ENCODE measurements at regions of chr6 and their contacts with region 1.

Region 1: DNA sequence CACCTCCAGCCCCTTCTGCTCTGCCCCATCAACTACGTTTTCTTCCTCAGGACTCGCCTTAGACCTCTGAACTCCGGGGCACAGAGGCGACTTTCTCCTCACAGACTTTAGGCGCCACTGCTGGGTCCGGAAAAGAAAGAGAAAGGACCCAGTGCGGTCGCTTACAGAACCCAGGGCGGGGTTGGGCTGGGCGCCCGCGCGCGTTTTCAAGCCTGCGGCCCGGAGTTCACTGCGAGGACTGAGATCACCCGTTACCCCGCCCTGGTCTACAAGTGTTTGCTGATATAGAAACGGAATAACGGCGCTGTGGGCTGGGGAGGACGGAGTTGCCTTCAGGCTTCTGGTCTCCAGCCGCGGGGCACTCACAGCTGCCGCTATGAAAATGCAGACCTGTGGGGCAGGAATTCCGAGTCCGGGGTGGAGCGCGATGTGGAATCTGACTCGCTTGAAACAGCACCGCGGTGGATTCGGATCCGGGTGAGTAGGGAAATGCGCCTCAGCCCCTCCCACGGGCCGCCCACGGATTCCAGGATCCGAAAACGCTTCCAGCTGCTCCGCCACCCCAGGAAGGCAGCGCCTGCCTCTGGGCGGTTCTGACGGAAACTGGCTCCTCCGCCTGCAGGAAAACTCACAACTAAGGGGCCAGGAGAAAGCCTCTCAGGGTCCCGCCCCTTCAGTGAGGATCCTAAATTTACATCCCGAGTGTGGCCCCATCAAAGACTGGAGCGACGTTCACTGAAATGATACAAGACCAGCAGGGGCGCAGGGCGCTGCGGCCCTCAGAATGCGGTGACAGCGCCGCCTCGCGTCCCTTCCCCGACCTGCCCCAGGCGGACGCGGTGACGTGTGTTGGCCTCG is 29.4 kb downstream of the HLA-F start:
- DNase-seq: peak; percentile 85 to 94
- ATAC-seq: peak; percentile 69 to 87 (median 75)
- H3K4me3 ChIP-seq: peak overlapping the region; percentile 89
- H3K4me3 Mint-ChIP-seq: peak overlapping the region; percentile 97
- H3K27ac ChIP-seq: peak overlapping the region; percentile 92
- H3K27ac Mint-ChIP-seq: peak overlapping the region; percentile 76 to 96
- H3K4me1 ChIP-seq: peaks cover 28% of the 10 kb centered on the region
- H3K4me1 Mint-ChIP-seq: peaks cover 43 to 65% of the 10 kb centered on the region in 2 donors
- H3K27me3 ChIP-seq: no peaks in the 10 kb centered on the region
- H3K27me3 Mint-ChIP-seq: no peaks in the 10 kb centered on the region
- CTCF ChIP-seq: peak; percentile 98

Region 2: DNA sequence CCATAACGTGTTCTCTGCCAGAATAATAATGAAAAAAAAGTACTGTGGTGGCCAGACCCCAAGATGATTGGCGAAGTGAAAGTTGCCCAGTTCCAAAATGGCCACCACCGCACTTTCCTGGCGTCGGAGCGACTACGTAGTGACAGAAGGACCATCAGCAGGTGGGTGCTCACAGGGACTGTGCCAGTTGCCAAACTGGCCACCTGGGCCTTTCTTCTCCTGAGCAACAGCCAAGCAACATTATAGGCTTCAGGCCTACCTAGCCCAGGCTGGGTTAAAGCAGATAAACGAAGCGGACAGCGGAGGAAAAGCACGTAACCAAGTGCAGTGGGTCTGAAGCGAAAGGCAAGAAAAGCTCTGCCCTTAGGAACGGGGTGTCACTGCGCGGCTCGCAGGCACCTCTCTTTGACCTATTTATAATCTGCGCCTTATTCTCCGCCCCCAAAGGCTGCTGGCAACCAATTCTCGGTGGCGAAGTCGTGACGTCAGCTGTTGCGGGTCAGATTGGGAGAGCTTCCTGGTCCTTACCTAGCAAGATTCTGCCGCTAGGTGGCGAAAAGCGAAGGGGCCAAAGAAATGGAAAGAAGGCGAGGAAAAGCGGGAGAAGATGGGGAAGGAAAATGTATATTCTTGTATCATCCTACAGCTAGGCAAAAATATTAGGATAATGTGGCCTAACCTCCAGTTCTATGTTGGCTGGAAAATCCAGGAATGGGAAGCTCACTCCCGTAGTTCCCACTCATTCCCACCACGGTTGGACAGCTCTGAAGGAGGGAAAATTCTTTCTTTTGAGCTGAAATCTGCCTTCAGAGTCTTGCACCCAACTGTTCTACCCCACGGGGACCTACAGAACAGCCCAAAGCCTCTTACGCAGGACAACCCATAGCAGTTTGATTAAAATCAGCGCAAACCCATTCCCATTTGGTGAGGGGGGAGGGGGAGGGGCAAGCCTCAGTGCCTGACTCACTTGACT is 102.7 kb before region 1 on chr6:
- intact Hi-C with region 1: loop called (anchors 2 kb)
- DNase-seq: peak; percentile 96 to 100
- ATAC-seq: peak; percentile 93 to 98 (median 94)
- H3K4me3 ChIP-seq: peak overlapping the region; percentile 76
- H3K4me3 Mint-ChIP-seq: peak overlapping the region; percentile 96
- H3K27ac ChIP-seq: peak overlapping the region; percentile 99
- H3K27ac Mint-ChIP-seq: peak overlapping the region; percentile 99
- H3K4me1 ChIP-seq: peaks cover 14% of the 10 kb centered on the region
- H3K4me1 Mint-ChIP-seq: peaks cover 14% of the 10 kb centered on the region in 2 donors
- H3K27me3 ChIP-seq: no peaks in the 10 kb centered on the region
- H3K27me3 Mint-ChIP-seq: peaks cover 0 to 6% of the 10 kb centered on the region in 2 donors
- CTCF ChIP-seq: peak; percentile 95

Region 3: DNA sequence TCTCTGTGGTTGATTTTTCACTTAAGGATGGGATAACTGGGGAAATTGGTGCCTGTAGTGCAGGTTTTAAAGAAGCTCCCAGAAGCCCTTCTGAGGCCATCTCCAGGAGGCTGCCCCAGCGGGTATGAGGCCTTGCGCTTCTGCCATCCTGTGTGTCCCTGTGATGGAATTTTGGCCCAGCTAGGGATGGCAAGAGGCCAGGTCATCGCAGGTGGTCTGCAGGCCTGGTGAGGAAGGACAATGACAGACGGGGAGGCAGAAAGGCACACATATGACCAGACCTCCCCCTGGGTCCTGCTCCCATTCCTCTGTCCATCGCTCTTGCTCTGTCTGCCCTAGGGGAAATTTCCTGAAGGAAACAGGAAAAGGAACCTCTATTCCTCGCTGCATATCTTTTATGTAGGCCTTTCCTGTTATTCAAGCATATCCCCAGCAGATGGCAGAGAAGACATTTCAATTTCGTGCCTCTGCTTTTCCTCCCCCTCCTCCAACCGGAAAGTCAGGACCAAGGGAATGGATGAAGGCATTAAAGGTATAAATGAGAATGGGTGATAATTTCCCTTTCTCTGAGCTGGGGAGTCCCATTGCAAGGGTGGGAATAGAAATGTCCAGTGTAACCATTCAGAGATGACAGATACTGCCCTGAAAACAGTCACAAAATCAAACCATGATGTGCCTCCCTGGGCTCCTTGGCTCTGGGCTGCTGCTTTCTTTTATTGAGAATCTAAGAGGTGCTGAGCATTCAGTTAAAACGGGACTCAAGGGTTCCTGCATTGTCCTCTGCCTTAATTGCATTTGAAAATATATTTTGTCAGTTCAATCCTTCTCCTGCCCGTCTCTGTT is 47.1 kb before region 1 on chr6:
- intact Hi-C with region 1: loop called (anchors 1 kb)
- DNase-seq: peak in 1 of 2 donors; percentile 73
- ATAC-seq: no peak
- H3K4me3 ChIP-seq: no peak overlapping the region
- H3K4me3 Mint-ChIP-seq: peak overlapping the region; percentile 55
- H3K27ac ChIP-seq: no peak overlapping the region
- H3K27ac Mint-ChIP-seq: peak overlapping the region; percentile 65 to 87
- H3K4me1 ChIP-seq: peaks cover 52% of the 10 kb centered on the region
- H3K4me1 Mint-ChIP-seq: peaks cover 57 to 66% of the 10 kb centered on the region in 2 donors
- H3K27me3 ChIP-seq: peaks cover 6% of the 10 kb centered on the region
- H3K27me3 Mint-ChIP-seq: peaks cover 10 to 17% of the 10 kb centered on the region in 2 donors
- CTCF ChIP-seq: peak; percentile 67

Region 4: DNA sequence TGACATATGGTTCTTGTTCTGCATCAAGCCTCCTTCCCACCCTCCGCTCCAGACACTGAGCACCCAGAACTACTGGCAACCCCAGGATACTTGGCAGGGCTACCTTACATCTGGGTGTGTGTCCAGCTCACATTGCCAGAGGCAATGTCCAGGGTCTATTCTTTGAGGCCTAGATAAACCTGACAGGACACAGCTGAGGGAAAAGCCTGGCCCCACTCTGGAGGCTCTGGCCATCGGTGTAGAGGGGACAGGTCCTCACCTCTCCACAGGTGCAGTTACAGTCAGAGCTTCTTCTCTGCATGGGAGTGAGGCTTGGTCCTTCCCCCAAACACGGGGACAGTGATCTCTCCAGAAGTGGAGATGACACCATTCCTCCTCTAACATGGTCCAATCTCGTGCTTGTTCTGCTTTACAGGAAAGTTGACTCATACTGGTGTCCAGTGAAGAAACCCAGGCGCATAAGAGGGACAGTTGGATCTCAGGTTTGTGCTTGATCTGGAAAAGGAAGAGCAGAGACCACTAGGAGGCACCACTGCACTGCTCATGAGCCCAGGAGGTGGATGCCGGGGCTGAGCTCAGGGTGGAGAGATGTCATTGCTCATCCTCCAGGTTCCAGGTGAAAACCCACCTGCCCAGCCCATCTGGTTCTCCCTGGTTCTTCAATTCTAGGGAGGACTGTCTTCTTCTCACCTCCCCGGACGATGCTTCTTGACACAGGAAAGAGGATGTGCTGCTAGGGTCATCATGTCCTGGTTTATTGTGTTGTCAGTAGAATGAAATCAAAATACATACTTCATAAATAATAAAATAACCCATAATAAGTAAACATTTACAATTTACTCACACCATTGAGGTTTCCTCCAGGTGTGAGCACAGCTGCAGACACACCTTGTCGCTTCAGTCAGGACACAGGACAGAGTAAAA is 14.7 kb before region 1 on chr6:
- intact Hi-C with region 1: loop called (anchors 1 kb)
- DNase-seq: peak; percentile 62 to 90
- ATAC-seq: peak; percentile 71 to 93 (median 86)
- H3K4me3 ChIP-seq: no peak overlapping the region
- H3K4me3 Mint-ChIP-seq: no peak overlapping the region
- H3K27ac ChIP-seq: no peak overlapping the region
- H3K27ac Mint-ChIP-seq: no peak overlapping the region
- H3K4me1 ChIP-seq: no peaks in the 10 kb centered on the region
- H3K4me1 Mint-ChIP-seq: peaks cover 15 to 21% of the 10 kb centered on the region in 2 donors
- H3K27me3 ChIP-seq: no peaks in the 10 kb centered on the region
- H3K27me3 Mint-ChIP-seq: no peaks in the 10 kb centered on the region
- CTCF ChIP-seq: peak; percentile 72

Region 5: DNA sequence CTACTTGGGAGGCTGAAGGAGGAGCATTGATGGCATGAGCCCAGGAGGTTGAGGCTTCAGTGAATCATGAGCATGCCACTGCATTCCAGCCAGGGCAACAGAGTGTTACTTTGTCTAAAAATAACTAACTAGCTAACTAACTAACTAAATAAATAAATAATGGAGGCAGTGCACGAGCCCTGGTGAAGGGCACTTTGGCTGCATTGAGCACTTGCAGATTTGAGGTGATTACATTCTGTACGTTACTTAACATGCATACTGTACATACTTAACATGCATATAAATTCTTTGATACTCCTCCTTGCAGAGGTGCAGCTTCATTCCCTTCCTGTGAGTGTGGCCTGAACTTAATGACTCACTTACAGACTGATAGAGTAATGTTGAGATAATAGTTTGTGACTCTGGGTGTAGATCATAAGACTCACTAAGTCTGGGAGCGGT is 200.3 kb after region 1 on chr6:
- intact Hi-C with region 1: no loop called
- DNase-seq: no peak
- ATAC-seq: no peak
- H3K4me3 ChIP-seq: no peak overlapping the region
- H3K4me3 Mint-ChIP-seq: no peak overlapping the region
- H3K27ac ChIP-seq: no peak overlapping the region
- H3K27ac Mint-ChIP-seq: no peak overlapping the region
- H3K4me1 ChIP-seq: peaks cover 3% of the 10 kb centered on the region
- H3K4me1 Mint-ChIP-seq: peaks cover 35 to 36% of the 10 kb centered on the region in 2 donors
- H3K27me3 ChIP-seq: no peaks in the 10 kb centered on the region
- H3K27me3 Mint-ChIP-seq: no peaks in the 10 kb centered on the region
- CTCF ChIP-seq: no peak